ENCODE measurements at regions of chr17 and their contacts with region 1.

Region 1: DNA sequence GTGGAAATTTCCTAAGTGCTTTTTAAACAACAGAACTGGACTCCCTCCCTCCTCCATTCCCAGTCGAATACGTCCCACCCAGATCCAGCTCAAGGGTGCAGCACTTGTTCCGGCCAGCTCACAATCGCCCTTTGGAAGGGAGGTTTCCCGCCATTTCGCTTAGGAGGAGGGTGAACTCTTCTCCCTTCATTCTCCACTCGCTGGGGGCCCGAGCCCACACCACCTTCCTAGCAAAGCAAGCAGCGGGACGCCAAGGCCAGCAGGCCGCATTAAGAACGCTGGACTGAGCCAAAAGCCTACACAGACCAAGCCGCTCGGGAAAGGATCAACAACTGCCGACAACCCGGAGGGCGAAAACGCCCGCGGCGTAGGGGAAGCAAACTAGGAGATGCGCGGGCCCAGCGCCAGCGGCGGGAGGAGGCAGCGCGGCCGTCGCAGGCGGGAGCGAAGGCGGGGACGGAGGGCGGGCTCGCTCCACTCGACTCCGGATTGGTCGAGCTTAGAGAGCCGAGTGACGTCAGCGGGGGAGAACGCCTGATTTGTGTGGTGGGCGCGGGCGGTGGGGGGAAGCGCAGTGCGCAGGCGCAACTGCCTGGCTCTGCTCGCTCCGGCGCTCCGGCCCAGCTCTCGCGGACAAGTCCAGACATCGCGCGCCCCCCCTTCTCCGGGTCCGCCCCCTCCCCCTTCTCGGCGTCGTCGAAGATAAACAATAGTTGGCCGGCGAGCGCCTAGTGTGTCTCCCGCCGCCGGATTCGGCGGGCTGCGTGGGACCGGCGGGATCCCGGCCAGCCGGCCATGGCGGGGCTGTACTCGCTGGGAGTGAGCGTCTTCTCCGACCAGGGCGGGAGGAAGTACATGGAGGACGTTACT is at the start of gene PPM1D:
- DNase-seq: peak; percentile 99
- H3K4me3 ChIP-seq: peak within 1 kb of the TSS; percentile 73 to 86
- H3K27ac ChIP-seq: peak within 1 kb of the TSS; percentile 96 to 99
- H3K4me1 ChIP-seq: no peaks in the 10 kb centered on the region
- H3K27me3 ChIP-seq: no peaks in the 10 kb centered on the region
- CTCF ChIP-seq: peak in 2 of 4 experiments; percentile 30 to 44
- POLR2A ChIP-seq: peak; percentile 89
- total RNA-seq, gene PPM1D: 10.4 to 18.9 TPM

Region 2: GRCh38 chr17:60392042-60392844 is 207.6 kb before region 1 on chr17 and contains the start of gene USP32:
- intact Hi-C with region 1: no loop called
- DNase-seq: peak; percentile 98
- H3K4me3 ChIP-seq: peak within 1 kb of the TSS; percentile 81 to 90
- H3K27ac ChIP-seq: peak within 1 kb of the TSS; percentile 95 to 96
- H3K4me1 ChIP-seq: peaks cover 5% of the 10 kb centered on the region
- H3K27me3 ChIP-seq: no peaks in the 10 kb centered on the region
- CTCF ChIP-seq: peak in 3 of 4 experiments; percentile 12 to 76 (median 49)
- POLR2A ChIP-seq: peak; percentile 71
- total RNA-seq, gene USP32: 21.8 to 59.3 TPM

Region 3: DNA sequence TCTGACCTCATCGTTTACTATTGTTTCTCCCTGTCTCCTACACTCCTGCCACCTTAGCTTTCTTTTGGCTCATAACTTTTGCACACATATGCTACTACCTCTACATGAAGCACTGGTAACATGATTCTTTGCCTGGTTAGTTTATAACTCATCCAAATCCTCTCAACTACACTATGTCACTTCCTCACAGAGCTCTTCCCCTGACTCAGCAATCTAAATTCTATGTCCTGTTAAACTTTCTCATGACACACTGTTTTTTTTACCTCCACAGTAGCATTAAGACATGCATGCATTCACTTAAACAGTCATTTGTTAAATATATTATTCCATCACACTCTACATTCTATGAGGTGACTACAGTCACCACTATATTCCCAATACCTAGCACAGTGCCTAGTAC is 93.5 kb before region 1 on chr17:
- intact Hi-C with region 1: no loop called
- DNase-seq: no peak
- H3K4me3 ChIP-seq: no peak overlapping the region
- H3K27ac ChIP-seq: no peak overlapping the region
- H3K4me1 ChIP-seq: no peaks in the 10 kb centered on the region
- H3K27me3 ChIP-seq: no peaks in the 10 kb centered on the region
- CTCF ChIP-seq: no peak
- POLR2A ChIP-seq: no peak

Region 4: GRCh38 chr17:60525685-60526514 is 74.0 kb before region 1 on chr17 and contains the start of gene APPBP2:
- intact Hi-C with region 1: loop called (anchors 2 kb)
- DNase-seq: peak; percentile 90
- H3K4me3 ChIP-seq: peak within 1 kb of the TSS; percentile 78 to 90
- H3K27ac ChIP-seq: peak within 1 kb of the TSS; percentile 98 to 100
- H3K4me1 ChIP-seq: no peaks in the 10 kb centered on the region
- H3K27me3 ChIP-seq: no peaks in the 10 kb centered on the region
- CTCF ChIP-seq: no peak
- POLR2A ChIP-seq: peak; percentile 93
- total RNA-seq, gene APPBP2: 35.7 to 50.0 TPM

Region 5: DNA sequence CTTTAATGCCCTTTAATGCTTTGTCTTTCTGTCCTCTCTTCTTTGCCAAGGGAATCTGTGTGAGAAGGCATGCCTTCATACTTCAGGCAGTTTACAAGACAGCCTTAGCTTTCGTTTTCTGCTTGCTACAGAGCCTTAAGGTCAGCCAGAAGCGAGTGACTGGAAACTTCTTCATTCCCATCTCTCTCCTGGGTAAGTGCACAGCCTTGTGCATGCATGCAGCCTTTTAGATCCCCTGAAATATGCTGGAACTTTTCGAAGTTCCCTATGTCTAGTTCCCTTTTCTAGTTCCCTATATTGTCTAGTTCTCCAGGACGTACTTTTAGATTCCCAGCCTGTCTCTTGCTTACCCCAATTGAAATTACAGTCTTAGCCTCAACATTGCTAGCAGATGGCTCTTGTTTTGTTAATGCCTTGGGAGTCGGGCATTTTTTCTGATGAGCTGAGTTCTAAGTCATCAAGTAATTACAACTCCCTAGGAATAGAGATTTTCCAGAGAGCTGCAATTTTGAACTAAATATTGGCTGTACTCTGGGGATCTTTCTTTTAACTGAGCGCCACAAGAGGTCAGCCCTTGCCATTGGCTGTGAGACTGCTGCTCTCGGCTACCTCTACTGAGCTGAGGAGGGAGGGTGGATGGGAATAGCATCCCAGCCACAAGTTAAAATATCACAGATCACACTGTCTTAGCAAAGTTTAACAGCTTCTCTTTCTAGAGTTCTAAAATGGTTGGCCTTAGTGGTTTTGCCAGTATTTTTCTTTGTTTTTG is 22.5 kb before region 1 on chr17:
- intact Hi-C with region 1: loop called (anchors 2 kb)
- DNase-seq: peak; percentile 45
- H3K4me3 ChIP-seq: peak overlapping the region; percentile 24 to 28
- H3K27ac ChIP-seq: peak overlapping the region; percentile 58 to 72
- H3K4me1 ChIP-seq: no peaks in the 10 kb centered on the region
- H3K27me3 ChIP-seq: no peaks in the 10 kb centered on the region
- CTCF ChIP-seq: peak in 3 of 4 experiments; percentile 17 to 42 (median 37)
- POLR2A ChIP-seq: no peak